ENCODE measurements at regions of chr18 and their contacts with region 1.

Region 1: DNA sequence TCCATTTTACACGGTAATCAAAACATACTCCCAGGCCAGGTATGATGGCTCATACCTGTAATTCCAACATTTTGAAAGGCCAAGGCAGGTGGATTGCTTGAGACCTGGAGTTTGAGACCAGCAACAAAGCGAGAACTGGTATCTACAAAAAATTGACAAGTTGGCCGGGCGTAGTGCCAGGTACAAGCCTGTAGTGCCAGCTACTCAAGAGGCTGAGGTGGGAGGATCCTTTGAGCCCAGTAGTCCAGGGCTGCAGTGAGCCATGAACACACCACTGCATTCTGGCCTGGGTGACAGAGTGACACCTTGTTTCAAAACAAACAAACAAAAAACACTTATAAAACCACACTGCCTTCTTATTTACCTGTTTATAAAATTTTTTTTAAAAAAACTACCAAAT is 80.8 kb downstream of the GAREM1 start:
- DNase-seq: no peak
- ATAC-seq: no peak
- H3K4me3 ChIP-seq: no peak overlapping the region
- H3K4me3 Mint-ChIP-seq: no peak overlapping the region
- H3K27ac ChIP-seq: no peak overlapping the region
- H3K27ac Mint-ChIP-seq: no peak overlapping the region
- H3K4me1 ChIP-seq: no peaks in the 10 kb centered on the region
- H3K4me1 Mint-ChIP-seq: no peaks in the 10 kb centered on the region
- H3K27me3 ChIP-seq: no peaks in the 10 kb centered on the region
- H3K27me3 Mint-ChIP-seq: peaks cover 0 to 25% of the 10 kb centered on the region in 2 donors
- CTCF ChIP-seq: no peak

Region 2: GRCh38 chr18:32454593-32454992 is 64.7 kb after region 1 on chr18:
- intact Hi-C with region 1: loop called (anchors 10 kb)
- DNase-seq: no peak
- ATAC-seq: no peak
- H3K4me3 ChIP-seq: no peak overlapping the region
- H3K4me3 Mint-ChIP-seq: no peak overlapping the region
- H3K27ac ChIP-seq: no peak overlapping the region
- H3K27ac Mint-ChIP-seq: no peak overlapping the region
- H3K4me1 ChIP-seq: no peaks in the 10 kb centered on the region
- H3K4me1 Mint-ChIP-seq: no peaks in the 10 kb centered on the region
- H3K27me3 ChIP-seq: peaks cover 2% of the 10 kb centered on the region
- H3K27me3 Mint-ChIP-seq: peaks cover 3 to 36% of the 10 kb centered on the region in 2 donors
- CTCF ChIP-seq: no peak

Region 3: DNA sequence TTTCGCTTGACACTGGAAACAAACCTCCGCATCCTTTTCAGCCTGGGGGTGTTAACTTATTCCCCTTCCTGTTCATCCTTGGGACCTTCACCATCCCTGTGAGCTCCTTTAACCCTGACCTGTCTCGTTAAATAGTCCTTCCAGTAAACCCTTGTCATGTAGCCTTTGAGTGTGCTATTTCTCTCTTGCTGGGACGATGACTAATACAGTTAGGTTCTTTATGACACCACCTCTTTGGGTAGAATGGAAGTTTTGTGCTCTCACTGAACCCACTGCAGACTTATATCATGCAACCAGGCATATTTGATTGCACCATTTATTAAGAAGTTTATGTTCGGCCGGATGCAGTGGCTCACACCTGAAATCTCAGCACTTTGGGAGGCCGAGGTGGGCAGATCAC is 121.3 kb after region 1 on chr18:
- intact Hi-C with region 1: no loop called
- DNase-seq: no peak
- ATAC-seq: no peak
- H3K4me3 ChIP-seq: no peak overlapping the region
- H3K4me3 Mint-ChIP-seq: no peak overlapping the region
- H3K27ac ChIP-seq: no peak overlapping the region
- H3K27ac Mint-ChIP-seq: no peak overlapping the region
- H3K4me1 ChIP-seq: no peaks in the 10 kb centered on the region
- H3K4me1 Mint-ChIP-seq: no peaks in the 10 kb centered on the region
- H3K27me3 ChIP-seq: no peaks in the 10 kb centered on the region
- H3K27me3 Mint-ChIP-seq: peaks cover 0 to 3% of the 10 kb centered on the region in 2 donors
- CTCF ChIP-seq: no peak

Measured in natural killer cell (primary cell).